ENCODE measurements at regions of chr2 and their contacts with region 1.

Region 1: GRCh38 chr2:11738589-11739436 is 7.6 kb upstream of the LPIN1 start:
- DNase-seq: no peak
- H3K4me3 ChIP-seq: no peak overlapping the region
- H3K27ac ChIP-seq: no peak overlapping the region
- H3K4me1 ChIP-seq: peaks cover 0 to 10% (median 5%) of the 10 kb centered on the region in 4 experiments; a peak in 5 of 7 replicates
- H3K27me3 ChIP-seq: no peaks in the 10 kb centered on the region; a peak in 1 of 7 replicates
- CTCF ChIP-seq: peak; percentile 75 to 86 (median 82)
- EP300 ChIP-seq: no peak
- POLR2A ChIP-seq: no peak
- RAD21 ChIP-seq: peak; percentile 78 to 86

Region 2: GRCh38 chr2:11726384-11726783 is 12.4 kb before region 1 on chr2:
- CTCF ChIA-PET with region 1: interaction called, 19 read pairs
- POLR2A ChIA-PET with region 1: no interaction called
- DNase-seq: no peak
- H3K4me3 ChIP-seq: no peak overlapping the region
- H3K27ac ChIP-seq: no peak overlapping the region
- H3K4me1 ChIP-seq: peaks cover 0 to 3% (median 0%) of the 10 kb centered on the region in 4 experiments; a peak in 3 of 7 replicates
- H3K27me3 ChIP-seq: no peaks in the 10 kb centered on the region
- CTCF ChIP-seq: no peak
- EP300 ChIP-seq: no peak
- POLR2A ChIP-seq: no peak
- RAD21 ChIP-seq: no peak

Region 3: DNA sequence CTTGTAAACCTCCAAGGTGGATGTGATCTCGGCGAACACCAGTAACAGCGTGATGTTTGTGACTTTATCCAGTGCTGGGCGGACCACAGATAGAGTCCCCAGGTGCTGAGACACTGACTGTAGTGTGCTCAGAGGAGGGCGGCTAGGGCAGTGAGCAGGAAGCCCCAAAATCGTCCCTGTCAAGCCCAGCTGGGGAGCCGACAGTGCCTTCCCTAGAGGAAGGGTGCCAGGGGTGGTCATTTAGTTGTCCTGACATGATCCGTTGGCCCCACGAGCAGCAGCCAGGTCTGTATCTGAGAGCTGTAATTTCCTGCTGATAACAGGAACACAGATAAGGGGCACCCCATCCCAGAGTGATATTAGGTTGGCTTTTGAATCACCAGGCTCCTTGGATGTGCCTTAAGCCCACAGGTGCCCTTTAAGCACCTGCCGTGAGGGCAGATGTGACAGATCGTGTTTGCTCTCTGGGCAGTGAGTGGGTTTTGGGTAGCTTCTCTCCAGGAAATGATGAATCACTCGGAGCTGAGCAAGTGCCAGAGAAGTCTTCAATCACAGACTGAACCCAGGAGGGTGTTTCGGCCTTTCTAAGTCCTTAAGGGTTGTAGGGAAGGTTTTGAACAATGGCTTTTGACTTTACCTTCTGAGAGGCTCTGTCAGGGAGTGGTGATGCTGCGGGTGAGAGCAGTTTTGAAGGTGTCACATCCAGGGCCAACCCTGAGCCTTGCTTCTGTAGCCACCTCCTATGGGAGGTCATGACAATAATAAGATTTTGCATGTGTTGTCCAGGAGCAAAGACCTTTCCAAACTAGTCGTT is 15.3 kb after region 1 on chr2:
- CTCF ChIA-PET with region 1: interaction called, 18 read pairs
- POLR2A ChIA-PET with region 1: no interaction called
- DNase-seq: no peak
- H3K4me3 ChIP-seq: no peak overlapping the region
- H3K27ac ChIP-seq: no peak overlapping the region
- H3K4me1 ChIP-seq: peaks cover 0 to 14% (median under 1%) of the 10 kb centered on the region in 4 experiments; a peak in 4 of 7 replicates
- H3K27me3 ChIP-seq: no peaks in the 10 kb centered on the region
- CTCF ChIP-seq: no peak
- EP300 ChIP-seq: no peak
- POLR2A ChIP-seq: no peak
- RAD21 ChIP-seq: no peak